Endothelial cell of umbilical vein (primary cell): ENCODE measurements at regions of chr3 and their contacts with region 1.

Region 1: GRCh38 chr3:193780810-193781472 is 187.9 kb downstream of the OPA1 start:
- DNase-seq: peak; percentile 79
- H3K4me3 ChIP-seq: no peak overlapping the region
- H3K27ac ChIP-seq: peak overlapping the region; percentile 65
- H3K4me1 ChIP-seq: peaks cover 18% of the 10 kb centered on the region
- H3K27me3 ChIP-seq: peaks cover 17 to 19% of the 10 kb centered on the region in 2 experiments
- CTCF ChIP-seq: peak; percentile 84 to 88
- POLR2A ChIP-seq: no peak

Region 2: DNA sequence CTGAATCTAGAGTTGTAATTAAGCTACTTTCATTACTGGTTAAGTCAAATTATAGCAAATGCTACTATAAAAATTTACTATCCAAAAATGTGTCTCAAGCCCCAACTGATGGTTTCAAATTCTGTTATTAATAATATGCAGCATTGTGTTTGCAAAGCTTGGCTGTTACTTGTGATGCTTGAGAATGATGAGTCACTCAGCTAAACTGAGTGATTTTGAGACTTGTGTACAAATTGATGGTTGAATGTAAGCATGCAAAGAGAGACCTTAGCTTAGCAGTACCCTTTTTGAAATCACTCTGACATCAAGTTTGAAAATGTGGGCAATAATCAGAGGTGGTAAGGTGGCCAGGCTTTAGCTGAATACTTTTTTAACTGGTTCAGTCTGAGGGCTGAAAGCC is 160.3 kb before region 1 on chr3:
- CTCF ChIA-PET with region 1: no interaction called
- POLR2A ChIA-PET with region 1: no interaction called
- dilution Hi-C with region 1: no loop called
- intact Hi-C with region 1: no loop called
- DNase-seq: peak; percentile 32
- H3K4me3 ChIP-seq: no peak overlapping the region
- H3K27ac ChIP-seq: no peak overlapping the region
- H3K4me1 ChIP-seq: peaks cover 8% of the 10 kb centered on the region
- H3K27me3 ChIP-seq: no peaks in the 10 kb centered on the region
- CTCF ChIP-seq: no peak
- POLR2A ChIP-seq: no peak

Region 3: DNA sequence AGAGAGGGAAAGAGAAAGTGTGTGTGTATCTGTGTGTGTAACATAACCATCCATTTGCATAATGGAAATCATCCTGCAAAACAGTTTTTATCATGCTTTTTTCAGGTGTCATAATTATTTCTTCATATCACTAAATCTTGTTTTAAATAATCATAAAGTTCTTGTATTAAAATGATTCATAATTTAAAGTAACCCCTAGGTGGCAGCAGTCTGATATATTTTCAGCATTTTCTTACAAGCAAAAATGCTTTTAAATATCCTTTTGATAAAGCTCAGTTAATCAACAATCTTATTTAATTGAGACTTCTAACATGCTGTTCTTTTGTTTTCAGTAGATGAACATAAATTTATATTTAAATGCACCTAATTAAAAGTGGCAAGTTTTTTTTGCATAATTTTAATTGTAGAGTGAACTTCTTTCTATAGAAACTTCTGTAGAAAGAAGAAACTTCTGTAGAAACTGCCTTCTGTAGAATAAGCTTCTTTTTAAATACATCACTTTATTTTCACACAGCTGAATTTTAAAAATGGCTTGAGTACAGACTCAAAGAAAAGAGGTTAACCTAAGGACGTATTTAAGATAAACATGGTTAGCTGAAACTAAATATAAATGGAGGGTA is 115.5 kb before region 1 on chr3:
- CTCF ChIA-PET with region 1: interaction called, 18 read pairs
- POLR2A ChIA-PET with region 1: no interaction called
- dilution Hi-C with region 1: no loop called
- intact Hi-C with region 1: loop called (anchors 5 kb)
- DNase-seq: peak; percentile 57
- H3K4me3 ChIP-seq: no peak overlapping the region
- H3K27ac ChIP-seq: no peak overlapping the region
- H3K4me1 ChIP-seq: no peaks in the 10 kb centered on the region
- H3K27me3 ChIP-seq: no peaks in the 10 kb centered on the region
- CTCF ChIP-seq: peak in 1 of 2 donors; percentile 22
- POLR2A ChIP-seq: no peak

Region 4: GRCh38 chr3:194043516-194043915 is 262.6 kb after region 1 on chr3:
- CTCF ChIA-PET with region 1: interaction called, 8 read pairs
- POLR2A ChIA-PET with region 1: no interaction called
- dilution Hi-C with region 1: no loop called
- intact Hi-C with region 1: loop called (anchors 5 kb)
- DNase-seq: peak; percentile 77
- H3K4me3 ChIP-seq: no peak overlapping the region
- H3K27ac ChIP-seq: peak overlapping the region; percentile 56
- H3K4me1 ChIP-seq: peaks cover 35% of the 10 kb centered on the region
- H3K27me3 ChIP-seq: no peaks in the 10 kb centered on the region
- CTCF ChIP-seq: no peak
- POLR2A ChIP-seq: no peak

Region 5: DNA sequence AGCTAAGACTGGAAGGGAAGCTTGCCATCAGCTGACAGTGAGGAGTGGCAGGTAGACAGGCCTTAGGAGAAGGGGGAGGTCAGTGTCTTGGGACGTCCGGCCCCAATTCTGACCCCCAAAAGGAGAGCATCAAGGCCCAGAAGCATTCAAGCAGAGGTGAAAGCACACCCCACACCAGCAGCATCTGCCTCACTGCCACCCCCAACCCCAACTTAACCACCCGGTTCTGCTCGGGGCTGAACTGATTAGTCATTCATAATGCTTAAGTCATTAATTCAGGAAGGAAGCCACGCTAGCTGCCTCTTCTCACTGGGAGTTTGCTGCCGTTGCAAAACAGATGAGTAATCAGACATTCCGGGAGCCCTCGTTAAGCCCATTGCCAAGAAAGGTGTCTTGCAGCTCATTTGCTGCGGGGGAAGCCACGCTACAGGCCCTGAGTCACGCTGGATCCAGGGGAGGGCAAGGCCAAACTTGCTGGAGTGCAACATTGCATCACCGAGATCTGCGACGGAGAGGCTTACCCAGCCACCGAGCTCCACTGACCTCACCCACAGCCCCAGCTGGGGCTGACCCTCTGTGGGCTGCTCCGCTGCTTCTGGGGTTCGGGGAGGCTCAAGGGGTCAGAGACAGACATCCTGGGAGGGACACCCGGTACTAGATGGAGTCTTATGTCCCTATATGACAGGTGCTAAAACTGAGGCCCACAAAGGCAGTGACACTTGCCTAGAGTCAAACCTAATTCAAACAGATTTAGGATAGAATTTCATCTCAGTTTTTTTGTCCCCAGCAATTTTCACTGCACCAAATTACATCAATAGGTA is 308.6 kb after region 1 on chr3:
- CTCF ChIA-PET with region 1: interaction called, 11 read pairs
- POLR2A ChIA-PET with region 1: no interaction called
- dilution Hi-C with region 1: no loop called
- intact Hi-C with region 1: no loop called
- DNase-seq: peak; percentile 99
- H3K4me3 ChIP-seq: no peak overlapping the region
- H3K27ac ChIP-seq: peak overlapping the region; percentile 94
- H3K4me1 ChIP-seq: peaks cover 22% of the 10 kb centered on the region
- H3K27me3 ChIP-seq: no peaks in the 10 kb centered on the region
- CTCF ChIP-seq: no peak
- POLR2A ChIP-seq: no peak

Region 6: DNA sequence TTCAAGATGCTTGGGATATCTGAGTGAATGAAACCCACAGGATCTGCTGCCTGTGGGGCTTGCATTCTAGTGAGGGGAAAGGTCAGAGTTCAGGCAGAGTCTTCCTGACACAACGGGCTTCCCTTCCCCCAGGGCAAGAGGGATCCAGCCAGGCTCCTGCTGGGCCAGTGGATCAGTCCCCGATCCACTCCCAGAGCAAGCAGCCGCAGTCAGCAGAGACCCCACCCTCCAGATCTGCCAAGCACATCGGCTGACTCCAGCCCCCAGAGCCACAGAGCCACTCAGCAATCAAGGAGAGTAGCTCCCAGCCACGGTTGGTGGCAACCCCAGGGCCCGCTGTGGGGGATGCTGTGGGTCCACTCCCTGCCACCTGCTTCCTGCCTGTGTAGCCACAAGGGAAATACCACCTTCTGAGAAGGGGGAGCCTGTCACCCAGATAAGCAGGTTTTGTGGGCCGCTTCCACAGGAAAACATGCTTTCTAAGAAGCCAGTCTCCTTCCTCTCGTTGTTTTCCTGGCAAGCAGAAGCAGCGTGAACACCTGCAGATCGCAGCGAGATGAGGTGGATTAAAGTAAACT is 525.3 kb after region 1 on chr3:
- CTCF ChIA-PET with region 1: interaction called, 10 read pairs
- POLR2A ChIA-PET with region 1: no interaction called
- dilution Hi-C with region 1: no loop called
- intact Hi-C with region 1: no loop called
- DNase-seq: peak; percentile 89
- H3K4me3 ChIP-seq: no peak overlapping the region
- H3K27ac ChIP-seq: no peak overlapping the region
- H3K4me1 ChIP-seq: peaks cover 14% of the 10 kb centered on the region
- H3K27me3 ChIP-seq: peaks cover 2% of the 10 kb centered on the region in 2 experiments
- CTCF ChIP-seq: no peak
- POLR2A ChIP-seq: no peak

Region 7: DNA sequence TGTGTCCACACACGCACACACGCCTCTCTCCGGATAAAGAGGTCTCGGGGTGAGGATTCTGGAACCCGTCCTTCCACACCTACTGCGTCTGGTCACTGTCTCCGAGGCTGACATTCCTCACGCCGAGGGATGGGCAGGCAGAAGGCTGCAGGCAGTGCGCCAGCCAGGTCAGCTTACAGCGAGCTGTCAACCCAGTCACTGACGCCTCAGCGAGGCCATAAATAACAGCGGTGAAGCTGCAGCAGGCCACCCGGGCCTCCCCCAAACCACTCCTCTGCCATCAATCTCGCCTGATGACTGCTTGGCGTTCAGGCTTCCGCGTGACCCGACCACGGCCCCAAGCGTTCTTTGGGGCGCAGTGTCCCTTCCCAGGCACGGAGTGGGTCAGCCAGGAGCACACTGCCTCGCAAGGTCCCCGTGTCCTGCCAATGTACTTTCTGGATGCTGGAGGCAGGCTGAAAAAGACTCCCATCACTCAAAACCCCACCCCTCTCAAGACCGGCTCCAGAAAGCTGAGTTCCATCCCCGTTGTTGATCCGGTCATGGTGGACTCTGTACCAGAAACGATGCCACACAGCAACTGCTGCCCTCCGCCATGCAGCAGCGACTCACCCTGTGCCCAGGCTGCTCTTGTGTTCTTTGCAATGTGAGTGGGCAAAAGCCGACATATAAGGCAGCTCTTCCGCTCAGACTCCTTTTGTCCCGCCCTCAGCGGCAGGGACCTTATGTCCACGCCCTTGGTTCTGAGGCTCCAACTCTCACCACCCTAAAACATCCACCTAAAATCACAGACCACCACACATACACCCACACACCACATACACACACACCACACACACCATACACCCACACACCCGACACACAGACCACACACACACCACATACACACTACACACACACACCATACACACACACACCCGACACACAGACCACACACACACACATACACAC is 543.1 kb after region 1 on chr3:
- CTCF ChIA-PET with region 1: interaction called, 10 read pairs
- POLR2A ChIA-PET with region 1: no interaction called
- dilution Hi-C with region 1: no loop called
- intact Hi-C with region 1: no loop called
- DNase-seq: no peak
- H3K4me3 ChIP-seq: no peak overlapping the region
- H3K27ac ChIP-seq: no peak overlapping the region
- H3K4me1 ChIP-seq: no peaks in the 10 kb centered on the region
- H3K27me3 ChIP-seq: no peaks in the 10 kb centered on the region
- CTCF ChIP-seq: no peak
- POLR2A ChIP-seq: no peak

Region 8: DNA sequence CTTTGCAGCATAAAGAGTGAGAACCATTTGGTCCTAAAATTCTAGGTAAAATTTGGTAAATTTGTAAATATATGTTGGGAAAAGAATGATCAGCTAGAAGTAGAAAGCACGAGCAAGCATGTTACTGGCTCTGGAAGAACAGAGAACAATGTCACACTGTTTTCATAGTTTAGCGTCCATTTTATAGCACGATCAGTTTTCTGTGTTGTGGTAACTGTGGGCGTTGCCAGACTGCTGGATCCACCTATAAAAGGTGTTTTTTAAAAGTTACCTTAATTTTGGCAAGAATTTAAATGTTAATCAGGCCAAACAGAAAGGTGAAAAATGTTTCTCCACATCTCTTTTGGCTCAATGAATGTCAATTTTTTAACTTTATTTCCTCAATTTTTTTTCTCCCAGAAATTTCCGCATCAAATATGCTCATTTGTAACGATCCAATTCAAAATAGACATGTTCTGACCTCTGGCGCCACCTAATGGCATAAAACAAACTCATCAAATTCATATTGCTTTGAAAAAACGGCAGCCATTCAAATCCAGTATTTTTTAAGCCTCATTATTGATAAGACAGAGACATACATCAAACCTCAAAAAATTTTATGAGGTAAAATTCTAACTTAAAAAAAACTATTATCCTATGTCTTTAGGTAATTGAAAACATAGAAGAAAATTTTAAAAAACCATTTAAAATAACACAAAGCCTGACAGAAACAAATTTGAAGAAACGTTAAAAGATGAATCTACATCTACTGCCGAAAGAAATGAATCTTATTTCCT is 623.6 kb after region 1 on chr3:
- CTCF ChIA-PET with region 1: interaction called, 8 read pairs
- POLR2A ChIA-PET with region 1: no interaction called
- dilution Hi-C with region 1: no loop called
- intact Hi-C with region 1: loop called (anchors 5 kb)
- DNase-seq: peak; percentile 69
- H3K4me3 ChIP-seq: no peak overlapping the region
- H3K27ac ChIP-seq: no peak overlapping the region
- H3K4me1 ChIP-seq: no peaks in the 10 kb centered on the region
- H3K27me3 ChIP-seq: peaks cover 0 to 1% of the 10 kb centered on the region in 2 experiments
- CTCF ChIP-seq: peak; percentile 36 to 49
- POLR2A ChIP-seq: no peak